ENCODE measurements at regions of chr11 and their contacts with region 1.

Region 1: GRCh38 chr11:117205211-117205818 is 6.1 kb downstream of the TAGLN start:
- DNase-seq: no peak
- H3K4me3 ChIP-seq: peak overlapping the region; percentile 70 to 96
- H3K27ac ChIP-seq: peak overlapping the region; percentile 97 to 98
- H3K4me1 ChIP-seq: peaks cover 0 to 33% (median 21%) of the 10 kb centered on the region in 4 donors
- H3K27me3 ChIP-seq: no peaks in the 10 kb centered on the region
- CTCF ChIP-seq: peak in 1 of 2 experiments; percentile 6

Region 2: GRCh38 chr11:117134431-117134830 is 70.9 kb before region 1 on chr11:
- intact Hi-C with region 1: loop called (anchors 5 kb)
- DNase-seq: no peak
- H3K4me3 ChIP-seq: no peak overlapping the region
- H3K27ac ChIP-seq: no peak overlapping the region
- H3K4me1 ChIP-seq: peaks cover 0 to 5% (median 0%) of the 10 kb centered on the region in 4 donors
- H3K27me3 ChIP-seq: peaks cover 0 to 7% of the 10 kb centered on the region in 2 donors
- CTCF ChIP-seq: no peak

Measured in tibial artery (tissue), 4 donors.